ENCODE measurements at regions of chr1 and their contacts with region 1.

Region 1: DNA sequence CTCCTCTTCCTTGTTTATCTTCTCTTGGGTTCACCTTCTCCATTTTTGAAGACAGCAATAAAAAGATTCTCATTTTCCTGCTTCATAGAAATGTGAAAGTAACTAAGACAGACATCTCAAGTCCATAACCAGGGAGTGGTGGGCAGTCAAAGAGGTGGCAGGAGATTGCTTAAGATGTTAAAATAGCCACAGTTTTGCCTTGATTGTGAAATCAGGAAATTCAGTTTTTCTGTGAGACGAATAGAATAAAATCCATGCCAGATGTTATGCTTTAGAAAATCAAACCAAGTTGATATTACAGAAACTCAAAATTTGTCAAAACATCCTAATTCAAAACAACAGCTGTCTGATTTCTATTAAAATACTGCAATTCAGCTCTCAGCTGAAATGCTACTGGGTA is 57.2 kb downstream of the TNN start:
- DNase-seq: no peak
- H3K4me3 Mint-ChIP-seq: no peak overlapping the region
- H3K27ac Mint-ChIP-seq: no peak overlapping the region
- H3K4me1 Mint-ChIP-seq: no peaks in the 10 kb centered on the region
- H3K27me3 Mint-ChIP-seq: no peaks in the 10 kb centered on the region

Region 2: GRCh38 chr1:174247472-174247871 is 877.4 kb before region 1 on chr1:
- CTCF ChIA-PET with region 1: no interaction called
- POLR2A ChIA-PET with region 1: no interaction called
- intact Hi-C with region 1: no loop called
- DNase-seq: no peak
- H3K4me3 Mint-ChIP-seq: no peak overlapping the region
- H3K27ac Mint-ChIP-seq: no peak overlapping the region
- H3K4me1 Mint-ChIP-seq: no peaks in the 10 kb centered on the region
- H3K27me3 Mint-ChIP-seq: no peaks in the 10 kb centered on the region

Region 3: DNA sequence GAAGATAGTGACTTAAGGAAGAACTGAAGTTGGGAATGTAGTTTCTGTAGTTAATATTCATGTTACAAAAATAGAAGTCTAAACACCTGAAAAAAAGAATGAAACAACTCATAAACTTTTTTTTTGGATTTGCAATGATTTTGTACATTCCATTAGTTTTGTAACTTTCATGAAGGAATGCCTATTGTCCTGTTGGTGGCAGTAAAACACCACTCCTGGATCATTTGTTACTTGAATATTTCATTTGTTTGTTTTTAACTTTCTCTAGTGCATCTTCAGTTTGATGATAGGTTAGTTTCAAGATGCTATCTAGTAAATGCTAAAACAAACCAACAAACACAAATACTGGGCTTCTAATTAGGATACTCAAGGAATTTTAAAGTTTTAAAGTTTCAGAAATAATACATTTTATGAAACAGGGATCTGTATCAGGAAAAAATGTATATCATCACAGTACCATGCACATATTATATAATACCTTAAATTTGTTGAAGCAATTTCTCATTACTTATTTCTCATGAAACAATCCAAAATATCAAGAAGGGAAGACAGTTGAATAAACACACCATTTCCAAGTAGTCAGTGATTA is 354.8 kb before region 1 on chr1:
- CTCF ChIA-PET with region 1: interaction called, 4 read pairs
- POLR2A ChIA-PET with region 1: no interaction called
- intact Hi-C with region 1: loop called (anchors 1 kb)
- DNase-seq: no peak
- H3K4me3 Mint-ChIP-seq: no peak overlapping the region
- H3K27ac Mint-ChIP-seq: no peak overlapping the region
- H3K4me1 Mint-ChIP-seq: peaks cover 5% of the 10 kb centered on the region
- H3K27me3 Mint-ChIP-seq: no peaks in the 10 kb centered on the region

Region 4: GRCh38 chr1:174850726-174851125 is 274.1 kb before region 1 on chr1:
- CTCF ChIA-PET with region 1: no interaction called
- POLR2A ChIA-PET with region 1: no interaction called
- intact Hi-C with region 1: no loop called
- DNase-seq: no peak
- H3K4me3 Mint-ChIP-seq: no peak overlapping the region
- H3K27ac Mint-ChIP-seq: no peak overlapping the region
- H3K4me1 Mint-ChIP-seq: peaks cover 3% of the 10 kb centered on the region
- H3K27me3 Mint-ChIP-seq: no peaks in the 10 kb centered on the region

Region 5: GRCh38 chr1:175035865-175036264 is 89.0 kb before region 1 on chr1:
- CTCF ChIA-PET with region 1: interaction called, 42 read pairs
- POLR2A ChIA-PET with region 1: no interaction called
- intact Hi-C with region 1: no loop called
- DNase-seq: no peak
- H3K4me3 Mint-ChIP-seq: no peak overlapping the region
- H3K27ac Mint-ChIP-seq: no peak overlapping the region
- H3K4me1 Mint-ChIP-seq: no peaks in the 10 kb centered on the region
- H3K27me3 Mint-ChIP-seq: no peaks in the 10 kb centered on the region

Region 6: GRCh38 chr1:175054736-175055135 is 70.1 kb before region 1 on chr1:
- CTCF ChIA-PET with region 1: no interaction called
- POLR2A ChIA-PET with region 1: no interaction called
- intact Hi-C with region 1: no loop called
- DNase-seq: no peak
- H3K4me3 Mint-ChIP-seq: no peak overlapping the region
- H3K27ac Mint-ChIP-seq: no peak overlapping the region
- H3K4me1 Mint-ChIP-seq: no peaks in the 10 kb centered on the region
- H3K27me3 Mint-ChIP-seq: peaks cover 18% of the 10 kb centered on the region